ENCODE measurements at regions of chr14 and their contacts with region 1.

Region 1: DNA sequence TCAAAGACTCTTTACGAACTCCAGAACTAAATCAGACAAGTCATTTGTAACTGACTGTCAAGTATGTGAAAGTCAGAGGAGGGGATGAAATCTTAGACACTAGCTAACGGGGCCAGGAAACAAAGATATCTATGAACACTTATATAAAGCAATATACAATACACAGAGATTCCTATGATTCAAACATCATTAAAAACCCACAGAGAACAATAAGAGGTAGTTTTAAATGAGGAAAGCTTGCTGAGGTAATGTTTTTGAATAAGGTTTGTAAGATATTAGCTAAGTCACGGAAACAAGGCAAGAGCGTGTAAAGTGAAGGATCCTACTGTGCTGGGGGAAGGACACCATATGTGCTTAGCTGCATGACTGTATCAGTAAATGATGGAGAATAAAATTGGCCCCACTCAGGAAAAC is 36.7 kb downstream of the SAV1 start:
- DNase-seq: no peak
- ATAC-seq: no peak
- H3K4me3 Mint-ChIP-seq: no peak overlapping the region
- H3K27ac Mint-ChIP-seq: no peak overlapping the region
- H3K4me1 Mint-ChIP-seq: no peaks in the 10 kb centered on the region
- H3K27me3 Mint-ChIP-seq: no peaks in the 10 kb centered on the region
- CTCF ChIP-seq: no peak

Region 2: DNA sequence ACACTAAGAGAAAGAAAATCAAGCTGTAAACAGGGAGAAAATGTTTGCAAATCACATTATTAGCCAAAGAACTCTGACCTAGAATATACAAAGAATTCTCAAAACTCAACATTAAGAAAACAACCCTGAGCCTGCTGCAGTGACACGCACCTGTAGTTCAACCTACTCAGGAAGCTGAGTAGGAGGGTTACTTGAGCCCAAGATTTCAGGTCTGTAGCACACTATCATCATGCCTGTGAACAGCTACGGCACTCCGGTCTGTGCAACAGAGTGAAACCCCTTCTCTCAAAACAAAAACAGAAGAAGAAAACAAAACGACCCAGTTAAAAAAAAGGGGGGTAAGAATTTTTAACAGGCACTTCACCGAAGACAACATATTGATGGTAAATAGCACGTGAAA is 15.9 kb after region 1 on chr14:
- CTCF ChIA-PET with region 1: interaction called, 12 read pairs
- POLR2A ChIA-PET with region 1: no interaction called
- intact Hi-C with region 1: no loop called
- DNase-seq: no peak
- ATAC-seq: no peak
- H3K4me3 Mint-ChIP-seq: no peak overlapping the region
- H3K27ac Mint-ChIP-seq: no peak overlapping the region
- H3K4me1 Mint-ChIP-seq: no peaks in the 10 kb centered on the region
- H3K27me3 Mint-ChIP-seq: no peaks in the 10 kb centered on the region
- CTCF ChIP-seq: no peak

Region 3: DNA sequence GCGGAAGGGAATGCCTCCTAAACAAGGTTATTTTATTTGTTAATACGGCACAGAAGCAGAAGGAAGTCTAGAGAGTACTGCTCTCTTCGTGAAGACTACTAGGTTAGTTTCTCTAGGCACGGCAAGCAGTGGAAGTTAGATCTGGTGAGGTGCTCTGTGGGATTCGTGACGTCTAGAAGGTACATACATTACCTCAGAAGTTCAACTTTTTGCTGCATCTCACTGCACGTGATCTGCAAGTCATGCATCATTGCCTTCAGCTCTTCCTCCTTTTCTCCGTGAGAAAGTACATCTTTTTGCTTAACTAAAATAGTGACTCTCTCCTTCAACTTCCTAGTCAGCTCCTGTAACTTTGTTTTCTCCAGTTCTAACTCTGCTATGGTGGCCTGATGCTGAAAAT is 124.9 kb after region 1 on chr14:
- CTCF ChIA-PET with region 1: no interaction called
- POLR2A ChIA-PET with region 1: no interaction called
- intact Hi-C with region 1: no loop called
- DNase-seq: no peak
- ATAC-seq: no peak
- H3K4me3 Mint-ChIP-seq: no peak overlapping the region
- H3K27ac Mint-ChIP-seq: no peak overlapping the region
- H3K4me1 Mint-ChIP-seq: peaks cover 12% of the 10 kb centered on the region
- H3K27me3 Mint-ChIP-seq: no peaks in the 10 kb centered on the region
- CTCF ChIP-seq: no peak

Measured in activated CD8-positive, alpha-beta T cell treated with anti-CD3 and anti-CD28 coated beads for 36 hours (primary cell).